ENCODE measurements at regions of chr5 and their contacts with region 1.

Region 1: DNA sequence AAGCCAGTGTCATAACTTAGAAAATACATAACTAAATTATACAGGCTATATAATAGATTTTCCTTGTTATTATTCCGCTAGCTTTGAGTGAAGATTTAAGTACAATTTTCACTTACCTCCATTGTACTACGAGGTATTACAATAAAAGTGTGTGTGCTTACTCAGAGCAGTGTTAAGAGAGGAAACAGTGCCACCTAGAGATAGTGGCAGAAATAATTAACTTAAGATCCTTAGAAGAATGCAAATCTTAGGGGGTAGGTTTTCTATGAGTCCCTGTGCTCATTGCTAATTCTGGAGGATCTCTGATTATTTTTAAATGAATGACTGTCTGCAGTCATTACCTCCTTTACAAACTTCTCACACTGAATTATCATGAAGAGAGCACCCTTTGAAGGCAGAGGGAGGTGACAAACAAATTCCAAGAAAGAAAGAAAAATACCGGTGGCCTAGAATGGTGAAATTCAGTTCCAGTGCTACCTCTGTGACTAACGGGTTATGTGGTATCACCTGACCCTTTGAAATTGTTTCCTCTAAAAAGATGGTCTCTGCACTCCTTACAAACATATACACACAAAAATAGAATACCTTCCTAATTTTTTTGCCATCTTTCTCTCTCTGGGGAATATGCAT is 379.8 kb downstream of the TRIM36 start:
- DNase-seq: peak in 2 of 4 experiments; percentile 2 to 3
- ATAC-seq: no peak
- H3K4me3 ChIP-seq: no peak overlapping the region
- H3K27ac ChIP-seq: no peak overlapping the region
- H3K4me1 ChIP-seq: no peaks in the 10 kb centered on the region
- H3K27me3 ChIP-seq: no peaks in the 10 kb centered on the region
- CTCF ChIP-seq: peak in 1 of 3 experiments; percentile 12; a peak in 1 of 6 replicates
- EP300 ChIP-seq: no peak
- POLR2A ChIP-seq: no peak
- RAD21 ChIP-seq: peak in 1 of 2 experiments; percentile 47; a peak in 2 of 4 replicates

Region 2: DNA sequence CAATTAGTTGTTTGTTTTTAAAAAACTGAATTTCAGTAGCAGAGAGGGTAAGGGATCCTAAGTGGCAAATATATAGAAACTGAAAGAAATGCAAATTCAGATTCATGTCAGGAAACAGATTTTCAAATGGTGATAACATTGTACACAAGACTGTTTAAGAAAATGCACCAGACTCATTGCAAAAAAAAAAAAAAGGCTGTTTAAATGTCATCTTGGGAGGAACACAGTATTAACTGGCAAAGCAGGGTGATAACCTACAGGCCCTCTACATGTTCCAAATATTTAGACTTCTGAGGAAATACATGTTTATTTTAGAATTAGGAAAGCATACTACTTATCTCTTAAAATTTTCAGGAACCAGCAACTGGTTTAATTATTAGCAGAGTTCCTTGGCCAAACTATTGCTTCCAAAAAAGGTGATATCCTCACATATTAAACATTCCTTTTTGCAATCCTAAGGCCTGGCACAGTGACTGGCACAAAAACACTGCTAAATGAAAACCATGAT is 1469.6 kb before region 1 on chr5:
- CTCF ChIA-PET with region 1: no interaction called
- POLR2A ChIA-PET with region 1: no interaction called
- in situ Hi-C with region 1: no loop called
- intact Hi-C with region 1: no loop called
- DNase-seq: no peak
- ATAC-seq: no peak
- H3K4me3 ChIP-seq: no peak overlapping the region
- H3K27ac ChIP-seq: no peak overlapping the region
- H3K4me1 ChIP-seq: no peaks in the 10 kb centered on the region
- H3K27me3 ChIP-seq: no peaks in the 10 kb centered on the region
- CTCF ChIP-seq: no peak
- EP300 ChIP-seq: no peak
- POLR2A ChIP-seq: no peak
- RAD21 ChIP-seq: no peak

Region 3: DNA sequence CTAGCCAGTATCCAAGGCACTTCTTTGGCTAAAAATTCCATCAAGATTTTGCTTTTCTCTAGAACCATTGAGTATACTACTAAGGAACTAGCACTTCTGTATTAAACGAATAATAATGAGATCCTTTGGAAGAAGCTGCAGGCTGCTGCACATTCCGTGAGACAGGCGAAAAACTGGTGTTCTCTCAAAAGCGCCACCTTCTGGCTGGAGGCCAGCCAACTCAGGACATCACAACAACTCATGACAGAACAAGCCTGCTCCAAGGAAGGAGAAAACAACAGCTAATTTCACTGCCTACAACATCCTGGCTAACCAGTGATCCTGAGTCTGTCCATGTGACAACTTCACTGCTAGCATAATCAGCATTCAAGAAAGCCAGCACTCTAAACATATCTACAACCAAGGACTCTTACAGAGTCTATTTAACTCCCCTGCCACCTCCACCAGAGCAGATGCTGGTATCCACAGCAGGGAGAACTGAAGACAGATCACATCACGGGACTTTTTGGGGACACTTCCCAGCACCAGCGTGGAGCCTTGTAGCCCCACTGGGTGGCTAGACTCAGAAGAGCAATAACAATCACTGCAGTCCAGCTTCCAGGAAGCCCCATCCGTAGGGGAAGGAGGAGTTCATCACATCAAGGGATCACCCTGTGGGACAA is 1125.9 kb before region 1 on chr5:
- CTCF ChIA-PET with region 1: no interaction called
- POLR2A ChIA-PET with region 1: no interaction called
- in situ Hi-C with region 1: loop called (anchors 25 kb)
- intact Hi-C with region 1: no loop called
- DNase-seq: peak in 2 of 4 experiments; percentile 22 to 54
- ATAC-seq: peak; percentile 82
- H3K4me3 ChIP-seq: no peak overlapping the region
- H3K27ac ChIP-seq: no peak overlapping the region
- H3K4me1 ChIP-seq: no peaks in the 10 kb centered on the region
- H3K27me3 ChIP-seq: no peaks in the 10 kb centered on the region
- CTCF ChIP-seq: peak; percentile 42 to 59 (median 58)
- EP300 ChIP-seq: no peak
- POLR2A ChIP-seq: no peak
- RAD21 ChIP-seq: 0 out of 4 replicates have a peak, but pooled peaks of 1 of the 2 experiments have one; percentile 24

Region 4: DNA sequence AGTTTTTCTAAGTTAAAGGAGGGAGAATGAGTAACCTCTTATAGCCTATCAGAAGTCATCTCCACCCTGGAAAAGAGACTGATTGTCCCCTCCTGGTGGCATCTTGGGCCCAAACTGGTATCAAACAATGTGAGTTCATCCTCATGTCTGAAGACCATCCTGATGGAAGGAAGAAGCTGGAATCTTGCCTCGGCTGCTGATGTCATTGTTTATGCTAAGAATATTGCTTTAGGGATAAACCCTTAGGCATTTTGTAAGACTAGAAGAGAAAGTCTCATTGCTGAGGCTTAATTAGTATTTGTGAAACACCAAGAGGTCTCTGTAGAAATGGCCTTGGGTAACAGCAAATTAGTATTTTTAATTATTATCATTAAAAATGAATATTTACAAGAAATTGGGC is 493.7 kb before region 1 on chr5:
- CTCF ChIA-PET with region 1: no interaction called
- POLR2A ChIA-PET with region 1: no interaction called
- in situ Hi-C with region 1: no loop called
- intact Hi-C with region 1: no loop called
- DNase-seq: no peak
- ATAC-seq: no peak
- H3K4me3 ChIP-seq: no peak overlapping the region
- H3K27ac ChIP-seq: no peak overlapping the region
- H3K4me1 ChIP-seq: no peaks in the 10 kb centered on the region
- H3K27me3 ChIP-seq: no peaks in the 10 kb centered on the region
- CTCF ChIP-seq: no peak
- EP300 ChIP-seq: no peak
- POLR2A ChIP-seq: no peak
- RAD21 ChIP-seq: no peak

Region 5: DNA sequence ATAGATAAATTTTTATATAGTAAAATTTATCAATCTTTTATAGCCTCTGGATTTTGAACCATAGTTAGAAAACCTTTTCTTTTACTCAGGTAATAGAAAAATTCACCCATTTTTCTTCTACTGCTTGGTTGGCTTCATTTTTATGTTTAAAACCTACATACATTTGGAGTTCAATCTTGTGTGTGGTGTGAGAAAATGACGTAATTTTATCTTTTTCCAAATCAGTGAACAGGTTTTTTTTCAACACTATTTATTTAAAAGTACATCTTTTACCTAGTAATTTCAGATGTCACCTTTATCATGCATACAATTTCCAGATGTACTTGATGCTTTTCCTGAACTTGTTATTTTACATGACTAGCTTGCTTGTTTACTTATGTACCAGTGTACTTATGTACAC is 179.6 kb after region 1 on chr5:
- CTCF ChIA-PET with region 1: no interaction called
- POLR2A ChIA-PET with region 1: no interaction called
- in situ Hi-C with region 1: no loop called
- intact Hi-C with region 1: no loop called
- DNase-seq: no peak
- ATAC-seq: no peak
- H3K4me3 ChIP-seq: no peak overlapping the region
- H3K27ac ChIP-seq: no peak overlapping the region
- H3K4me1 ChIP-seq: no peaks in the 10 kb centered on the region
- H3K27me3 ChIP-seq: no peaks in the 10 kb centered on the region
- CTCF ChIP-seq: no peak
- EP300 ChIP-seq: no peak
- POLR2A ChIP-seq: no peak
- RAD21 ChIP-seq: no peak

Region 6: GRCh38 chr5:115806981-115807653 is 1017.2 kb after region 1 on chr5:
- CTCF ChIA-PET with region 1: no interaction called
- POLR2A ChIA-PET with region 1: no interaction called
- in situ Hi-C with region 1: no loop called
- intact Hi-C with region 1: no loop called
- DNase-seq: no peak
- ATAC-seq: no peak
- H3K4me3 ChIP-seq: no peak overlapping the region
- H3K27ac ChIP-seq: no peak overlapping the region
- H3K4me1 ChIP-seq: no peaks in the 10 kb centered on the region
- H3K27me3 ChIP-seq: peaks cover 3 to 6% of the 10 kb centered on the region in 2 experiments; a peak in 2 of 5 replicates
- CTCF ChIP-seq: no peak
- EP300 ChIP-seq: no peak
- POLR2A ChIP-seq: no peak
- RAD21 ChIP-seq: no peak

Measured in K562 (cell line).